ENCODE measurements at regions of chr10 and their contacts with region 1.

Region 1: DNA sequence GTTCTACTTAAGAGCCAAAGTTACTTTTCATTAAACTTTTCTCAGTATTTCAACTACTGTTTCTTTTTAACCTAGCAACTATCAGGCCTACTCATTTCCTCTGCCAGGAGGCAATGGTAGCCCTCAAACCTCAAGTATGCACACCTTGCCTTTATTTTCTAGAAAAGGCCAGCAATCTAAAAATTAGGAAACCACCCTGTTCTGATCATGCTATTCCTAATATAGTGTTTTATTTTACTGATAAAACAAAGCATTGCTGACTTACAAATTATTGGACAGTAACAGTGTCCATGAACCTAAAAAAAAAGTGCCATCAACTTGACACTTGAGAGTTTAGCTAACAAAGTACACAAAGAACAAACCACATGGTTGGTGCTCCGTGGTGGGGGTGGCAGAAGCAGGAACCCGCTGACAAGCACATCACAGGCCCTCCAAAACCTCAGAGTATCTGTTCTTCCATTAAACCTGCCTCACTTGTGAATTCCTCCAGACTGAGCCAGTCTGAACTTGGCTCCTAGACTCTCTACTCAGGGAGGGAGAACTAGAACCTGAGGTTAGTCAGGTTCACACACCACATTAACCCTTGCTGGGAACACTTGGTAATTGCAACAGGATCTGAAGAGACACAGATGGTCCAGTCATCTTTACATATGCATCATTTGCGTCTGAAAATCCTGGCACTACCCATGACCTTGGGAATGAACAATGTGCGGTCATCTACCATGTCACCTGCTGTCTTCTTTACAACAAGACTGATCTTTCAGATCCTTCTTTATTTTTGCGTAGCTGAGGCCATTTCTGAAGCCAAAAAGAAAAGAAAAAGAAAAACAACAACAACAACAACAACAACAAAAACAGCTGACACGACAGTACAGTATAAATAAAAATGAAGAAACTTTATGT is 31.9 kb downstream of the PIP4K2A start:
- DNase-seq: peak; percentile 89
- H3K4me3 Mint-ChIP-seq: peak overlapping the region; percentile 78
- H3K27ac Mint-ChIP-seq: peak overlapping the region; percentile 92
- H3K4me1 Mint-ChIP-seq: peaks cover 76% of the 10 kb centered on the region
- H3K27me3 Mint-ChIP-seq: no peaks in the 10 kb centered on the region

Region 2: DNA sequence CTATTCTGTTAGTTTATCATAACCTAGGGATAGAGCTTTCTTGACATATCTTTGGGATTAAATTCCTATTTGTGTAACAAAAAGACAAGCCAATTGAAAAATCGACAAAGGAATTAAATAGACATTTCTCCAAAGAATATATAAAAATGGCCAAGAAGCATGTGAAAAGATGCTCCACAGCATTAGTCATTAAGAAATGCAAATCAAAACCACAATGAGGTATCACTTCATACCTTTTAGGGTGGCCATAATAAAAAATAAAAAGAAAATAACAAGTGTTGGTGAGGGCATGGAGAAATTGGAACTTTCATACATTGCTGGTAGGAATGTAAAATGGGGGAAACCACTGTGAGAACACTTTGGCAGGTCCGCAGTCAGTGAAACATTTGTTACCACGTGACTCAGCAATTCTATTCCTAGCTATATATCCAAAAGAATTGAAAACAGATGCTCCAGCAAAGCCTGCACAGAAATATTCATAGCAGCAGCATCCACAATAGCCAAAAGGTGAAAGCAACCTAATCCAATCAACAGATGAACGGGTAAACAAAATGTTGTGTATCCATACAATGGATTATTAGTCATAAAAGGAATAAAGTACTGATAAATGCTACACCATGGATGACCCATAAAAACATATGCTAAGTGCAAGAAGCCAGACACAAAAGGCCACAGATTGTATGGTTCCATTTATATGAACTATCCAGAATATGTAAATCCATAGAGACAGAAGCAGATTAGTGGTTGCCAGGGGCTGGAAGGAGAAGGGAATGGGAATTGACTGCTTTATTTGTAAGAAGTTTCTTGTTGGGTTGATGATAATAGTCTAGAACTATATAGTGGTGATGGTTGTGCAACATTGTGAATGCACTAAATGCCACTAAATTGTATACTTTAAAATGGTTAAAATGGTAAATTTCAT is 316.6 kb before region 1 on chr10:
- intact Hi-C with region 1: loop called (anchors 2 kb)
- DNase-seq: no peak
- H3K4me3 Mint-ChIP-seq: no peak overlapping the region
- H3K27ac Mint-ChIP-seq: peak overlapping the region; percentile 67
- H3K4me1 Mint-ChIP-seq: peaks cover 36% of the 10 kb centered on the region
- H3K27me3 Mint-ChIP-seq: no peaks in the 10 kb centered on the region

Region 3: DNA sequence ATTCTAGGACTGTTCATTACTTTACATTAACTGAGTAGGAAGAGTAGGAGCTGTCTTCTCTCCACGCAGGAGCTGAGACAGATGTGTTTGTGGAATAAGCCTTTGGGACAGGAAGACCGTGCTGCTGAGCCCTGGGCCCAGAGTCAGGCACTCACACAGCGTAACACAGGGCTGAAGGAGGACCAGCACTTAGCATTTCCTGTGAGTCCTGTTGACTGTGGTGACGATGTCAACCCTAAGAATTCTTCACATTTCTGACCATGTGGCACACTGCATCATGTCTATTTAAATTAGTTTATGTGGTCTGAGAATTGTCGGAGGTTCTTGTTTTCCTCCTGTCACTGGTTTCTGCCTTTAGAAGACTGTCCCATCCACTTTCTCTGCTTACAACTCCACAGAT is 85.3 kb before region 1 on chr10:
- intact Hi-C with region 1: loop called (anchors 1 kb)
- DNase-seq: no peak
- H3K4me3 Mint-ChIP-seq: no peak overlapping the region
- H3K27ac Mint-ChIP-seq: peak overlapping the region; percentile 34
- H3K4me1 Mint-ChIP-seq: peaks cover 46% of the 10 kb centered on the region
- H3K27me3 Mint-ChIP-seq: no peaks in the 10 kb centered on the region

Region 4: DNA sequence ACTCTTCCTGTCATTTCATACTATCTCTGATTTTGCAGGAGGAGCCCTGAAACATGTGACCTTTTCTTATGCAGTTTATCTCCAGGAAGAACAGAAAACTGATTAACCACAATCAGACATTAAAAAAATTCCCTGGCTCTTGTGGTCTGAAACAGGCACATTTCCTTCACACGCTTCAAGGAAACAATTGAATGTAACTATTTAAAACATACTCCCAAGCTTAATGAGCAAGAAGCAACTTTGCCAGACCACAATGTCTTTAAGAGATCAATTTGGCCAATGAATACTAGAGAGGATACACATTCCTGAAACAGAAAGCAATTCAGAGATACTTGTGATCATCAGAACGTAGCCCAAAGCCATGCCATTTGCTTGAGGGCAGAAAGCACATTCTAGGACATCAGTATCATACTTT is 33.9 kb before region 1 on chr10:
- intact Hi-C with region 1: loop called (anchors 1 kb)
- DNase-seq: peak; percentile 63
- H3K4me3 Mint-ChIP-seq: peak overlapping the region; percentile 90
- H3K27ac Mint-ChIP-seq: peak overlapping the region; percentile 100
- H3K4me1 Mint-ChIP-seq: peaks cover 87% of the 10 kb centered on the region
- H3K27me3 Mint-ChIP-seq: no peaks in the 10 kb centered on the region

Region 5: DNA sequence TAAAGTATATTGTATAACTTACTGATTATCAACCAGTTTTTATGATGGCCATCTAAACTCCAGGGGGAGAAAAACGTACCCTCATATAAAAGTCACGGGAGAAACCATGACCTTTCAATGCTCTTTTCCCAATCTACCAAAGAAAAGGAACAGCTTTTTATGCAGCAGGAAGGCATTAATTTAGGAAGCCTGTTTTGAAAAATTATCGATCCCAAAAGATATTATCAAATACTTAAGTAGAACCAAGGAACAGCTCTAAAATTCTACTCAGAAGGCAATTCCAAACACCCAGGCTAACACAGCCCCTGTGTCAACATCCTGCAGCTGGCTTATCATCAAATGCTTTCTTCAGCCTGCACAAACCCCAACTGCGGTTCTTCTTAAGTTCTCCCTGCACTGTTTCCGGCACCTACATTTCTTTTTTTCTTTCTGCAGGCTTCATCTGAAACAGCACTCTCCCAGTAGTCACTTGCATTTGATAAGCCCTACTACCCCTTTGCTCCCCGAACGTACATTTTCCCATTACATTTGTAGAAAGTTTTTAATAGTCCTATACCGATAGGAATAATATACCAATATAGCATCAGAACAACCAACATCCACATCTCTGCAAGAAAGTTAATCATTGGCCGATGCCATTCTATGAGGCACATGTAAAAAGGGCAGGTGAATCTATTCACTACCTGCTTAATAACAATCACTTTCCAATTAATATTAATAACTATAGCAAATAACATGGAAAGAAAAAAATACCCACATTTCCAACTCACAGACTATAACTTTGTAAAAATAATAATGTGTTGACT is 16.0 kb before region 1 on chr10:
- intact Hi-C with region 1: loop called (anchors 1 kb)
- DNase-seq: peak; percentile 90
- H3K4me3 Mint-ChIP-seq: peak overlapping the region; percentile 90
- H3K27ac Mint-ChIP-seq: peak overlapping the region; percentile 94
- H3K4me1 Mint-ChIP-seq: peaks cover 52% of the 10 kb centered on the region
- H3K27me3 Mint-ChIP-seq: no peaks in the 10 kb centered on the region